ENCODE measurements at regions of chr14 and their contacts with region 1.

Region 1: GRCh38 chr14:76876076-76876475 is 49.9 kb downstream of the LRRC74A start:
- DNase-seq: peak; percentile 55
- H3K4me3 Mint-ChIP-seq: no peak overlapping the region
- H3K27ac Mint-ChIP-seq: no peak overlapping the region
- H3K4me1 Mint-ChIP-seq: no peaks in the 10 kb centered on the region
- H3K27me3 Mint-ChIP-seq: no peaks in the 10 kb centered on the region

Region 2: GRCh38 chr14:76376878-76377734 is 499.0 kb before region 1 on chr14:
- CTCF ChIA-PET with region 1: no interaction called
- intact Hi-C with region 1: no loop called
- DNase-seq: no peak
- H3K4me3 Mint-ChIP-seq: no peak overlapping the region
- H3K27ac Mint-ChIP-seq: no peak overlapping the region
- H3K4me1 Mint-ChIP-seq: peaks cover 3% of the 10 kb centered on the region
- H3K27me3 Mint-ChIP-seq: peaks cover 58% of the 10 kb centered on the region

Region 3: GRCh38 chr14:76752744-76753143 is 123.3 kb before region 1 on chr14:
- CTCF ChIA-PET with region 1: no interaction called
- intact Hi-C with region 1: no loop called
- DNase-seq: no peak
- H3K4me3 Mint-ChIP-seq: no peak overlapping the region
- H3K27ac Mint-ChIP-seq: no peak overlapping the region
- H3K4me1 Mint-ChIP-seq: no peaks in the 10 kb centered on the region
- H3K27me3 Mint-ChIP-seq: no peaks in the 10 kb centered on the region

Region 4: GRCh38 chr14:76887196-76887595 is 11.1 kb after region 1 on chr14:
- CTCF ChIA-PET with region 1: interaction called, 68 read pairs
- intact Hi-C with region 1: no loop called
- DNase-seq: no peak
- H3K4me3 Mint-ChIP-seq: no peak overlapping the region
- H3K27ac Mint-ChIP-seq: no peak overlapping the region
- H3K4me1 Mint-ChIP-seq: peaks cover 6% of the 10 kb centered on the region
- H3K27me3 Mint-ChIP-seq: no peaks in the 10 kb centered on the region

Region 5: DNA sequence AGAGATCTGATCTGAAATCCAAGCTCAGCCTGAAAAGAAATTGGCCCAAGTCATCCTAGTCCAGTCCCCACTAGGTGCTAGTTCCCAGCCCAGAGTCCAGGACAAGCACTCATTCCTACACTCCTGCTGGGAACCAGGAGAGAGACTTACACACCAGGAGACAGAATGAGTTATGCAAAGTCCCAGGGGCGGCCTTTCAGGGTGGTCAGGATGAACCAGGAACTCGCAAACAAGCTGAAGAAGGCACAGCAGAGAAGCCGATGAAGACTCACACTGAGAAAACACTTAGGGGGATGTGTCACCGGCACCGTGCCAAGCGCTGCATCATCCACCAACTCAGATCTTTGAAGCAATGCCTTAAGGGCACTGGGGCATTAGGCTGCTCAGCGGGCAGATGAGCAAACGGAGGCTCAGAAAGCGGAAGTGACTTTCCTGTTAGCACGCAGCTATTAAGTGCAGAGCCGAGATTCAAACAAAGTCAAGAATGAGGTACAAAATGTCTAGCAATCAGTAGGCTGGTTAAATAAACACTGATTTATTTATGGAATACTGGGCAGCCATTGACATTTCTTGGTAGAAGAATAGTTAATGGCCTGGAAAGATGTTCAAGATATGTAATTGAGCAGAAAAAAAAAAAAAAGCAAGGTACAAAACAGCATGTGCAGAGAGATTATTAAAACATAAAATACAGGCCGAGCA is 28.8 kb after region 1 on chr14:
- CTCF ChIA-PET with region 1: interaction called, 47 read pairs
- intact Hi-C with region 1: loop called (anchors 2 kb)
- DNase-seq: peak; percentile 95
- H3K4me3 Mint-ChIP-seq: no peak overlapping the region
- H3K27ac Mint-ChIP-seq: no peak overlapping the region
- H3K4me1 Mint-ChIP-seq: peaks cover 30% of the 10 kb centered on the region
- H3K27me3 Mint-ChIP-seq: no peaks in the 10 kb centered on the region

Region 6: GRCh38 chr14:76911473-76911872 is 35.4 kb after region 1 on chr14:
- CTCF ChIA-PET with region 1: interaction called, 47 read pairs
- intact Hi-C with region 1: loop called (anchors 1 kb)
- DNase-seq: no peak
- H3K4me3 Mint-ChIP-seq: no peak overlapping the region
- H3K27ac Mint-ChIP-seq: no peak overlapping the region
- H3K4me1 Mint-ChIP-seq: peaks cover 15% of the 10 kb centered on the region
- H3K27me3 Mint-ChIP-seq: no peaks in the 10 kb centered on the region

Region 7: DNA sequence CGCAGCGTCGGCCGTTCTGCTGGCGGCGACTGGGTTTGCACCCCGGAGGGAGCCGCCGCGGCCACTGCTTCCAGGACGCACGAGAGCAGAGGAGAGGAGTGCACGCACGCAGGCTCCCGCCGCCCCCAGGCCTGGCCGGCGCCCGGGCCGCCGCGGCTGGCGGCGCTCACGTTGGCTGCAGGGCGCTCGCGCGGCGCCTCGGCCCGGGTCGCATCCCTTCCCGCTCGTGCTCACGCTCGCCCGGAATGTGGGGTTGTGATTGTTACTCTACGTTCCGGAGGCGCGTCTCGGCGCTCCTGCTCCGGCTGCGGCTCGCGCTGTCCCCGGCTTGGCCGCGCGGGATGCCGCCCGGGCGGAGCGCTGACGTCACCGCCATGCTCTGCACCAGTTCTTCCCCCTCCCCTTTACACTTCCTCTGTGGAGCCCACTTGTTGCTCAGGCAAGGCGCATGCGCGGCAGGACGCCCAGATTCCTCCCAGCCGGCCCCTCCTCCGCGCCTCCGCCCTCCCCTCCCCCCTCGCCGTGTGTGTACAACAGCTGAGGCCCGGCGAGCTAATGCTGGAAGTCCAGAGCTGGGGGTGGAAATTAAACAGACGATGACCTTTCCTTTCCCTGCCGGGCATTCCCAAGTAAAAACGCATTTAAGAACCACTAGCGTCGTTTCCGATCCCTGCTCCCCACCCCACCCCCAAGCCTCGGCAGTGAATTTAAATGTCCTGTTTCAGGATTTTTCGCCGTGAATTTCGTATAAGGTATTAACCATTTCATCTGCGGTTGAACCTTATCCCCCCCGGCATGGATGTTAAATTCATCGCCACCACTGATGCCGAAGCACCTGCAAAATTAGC is 152.5 kb after region 1 on chr14 and contains the start of gene IRF2BPL:
- CTCF ChIA-PET with region 1: interaction called, 11 read pairs
- intact Hi-C with region 1: no loop called
- DNase-seq: peak; percentile 96
- H3K4me3 Mint-ChIP-seq: peak within 1 kb of the TSS; percentile 82
- H3K27ac Mint-ChIP-seq: peak within 1 kb of the TSS; percentile 94
- H3K4me1 Mint-ChIP-seq: peaks cover 57% of the 10 kb centered on the region
- H3K27me3 Mint-ChIP-seq: no peaks in the 10 kb centered on the region
- total RNA-seq, gene IRF2BPL: 34.8 to 35.2 TPM

Region 8: GRCh38 chr14:77222546-77223225 is 346.6 kb after region 1 on chr14:
- CTCF ChIA-PET with region 1: no interaction called
- intact Hi-C with region 1: no loop called
- DNase-seq: no peak
- H3K4me3 Mint-ChIP-seq: no peak overlapping the region
- H3K27ac Mint-ChIP-seq: no peak overlapping the region
- H3K4me1 Mint-ChIP-seq: no peaks in the 10 kb centered on the region
- H3K27me3 Mint-ChIP-seq: no peaks in the 10 kb centered on the region

Measured in activated naive CD4-positive, alpha-beta T cell treated with anti-CD3 and anti-CD28 coated beads for 36 hours (primary cell).